Aorta (tissue), 5 donors: ENCODE measurements at regions of chrX and their contacts with region 1.

Region 1: DNA sequence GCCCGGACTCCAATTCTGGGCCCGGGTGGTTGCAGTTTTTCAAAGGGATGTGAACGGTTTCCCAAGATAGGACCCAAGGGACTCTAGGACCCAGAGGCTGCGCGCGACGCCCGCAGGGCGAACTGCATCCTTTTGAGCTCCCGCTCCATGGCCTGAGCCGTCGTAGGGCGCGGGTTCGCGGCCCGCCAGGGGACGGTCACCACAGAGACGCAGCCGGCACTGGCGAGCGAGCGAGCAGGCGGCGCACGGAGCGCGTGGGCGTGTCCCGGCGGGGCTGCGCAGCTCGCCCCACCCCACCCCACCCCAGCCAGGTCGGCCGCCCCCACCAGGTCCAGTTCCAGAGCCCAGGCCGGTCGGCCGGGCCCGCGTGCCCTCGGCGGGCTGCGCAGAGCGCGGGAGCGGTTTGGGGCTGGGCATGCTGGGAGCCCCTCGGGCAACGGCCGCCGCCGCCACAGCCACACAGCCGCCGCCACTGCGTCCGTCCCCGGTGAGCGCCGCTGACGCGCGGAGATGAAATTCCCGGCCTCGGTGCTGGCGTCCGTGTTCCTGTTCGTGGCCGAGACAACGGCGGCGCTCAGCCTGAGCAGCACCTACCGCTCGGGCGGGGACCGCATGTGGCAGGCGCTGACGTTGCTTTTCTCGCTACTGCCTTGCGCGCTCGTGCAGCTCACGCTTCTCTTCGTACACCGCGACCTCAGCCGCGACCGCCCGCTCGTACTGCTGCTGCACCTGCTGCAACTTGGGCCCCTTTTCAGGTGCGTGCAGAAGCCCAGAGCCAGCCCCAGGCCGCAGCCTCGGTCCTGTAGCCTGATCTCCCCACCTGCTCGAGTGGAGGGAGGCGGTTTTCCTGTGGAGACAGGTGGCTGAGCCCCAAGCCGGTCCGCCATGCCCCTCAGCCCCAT is at the start of gene XK:
- DNase-seq: peak; percentile 65 to 84
- ATAC-seq: peak; percentile 79
- H3K4me3 ChIP-seq: peak within 1 kb of the TSS; percentile 9 to 16
- H3K27ac ChIP-seq: peak within 1 kb of the TSS; percentile 49 to 58
- H3K4me1 ChIP-seq: no peaks in the 10 kb centered on the region
- H3K27me3 ChIP-seq: no peaks in the 10 kb centered on the region
- total RNA-seq, gene XK: 0.93 to 1.7 TPM

Region 2: GRCh38 chrX:37722595-37722994 is 36.9 kb after region 1 on chrX:
- intact Hi-C with region 1: loop called in 1 of 2 experiments (anchors 5 kb)
- DNase-seq: no peak
- ATAC-seq: no peak
- H3K4me3 ChIP-seq: no peak overlapping the region
- H3K27ac ChIP-seq: peak overlapping the region in 1 of 2 donors; percentile 28
- H3K4me1 ChIP-seq: no peaks in the 10 kb centered on the region
- H3K27me3 ChIP-seq: no peaks in the 10 kb centered on the region

Region 3: GRCh38 chrX:37787423-37787869 is 101.7 kb after region 1 on chrX:
- intact Hi-C with region 1: no loop called
- DNase-seq: no peak
- ATAC-seq: no peak
- H3K4me3 ChIP-seq: no peak overlapping the region
- H3K27ac ChIP-seq: no peak overlapping the region
- H3K4me1 ChIP-seq: no peaks in the 10 kb centered on the region
- H3K27me3 ChIP-seq: no peaks in the 10 kb centered on the region